Activated CD4-positive, alpha-beta T cell treated with anti-CD3 and anti-CD28 coated beads for 36 hours (primary cell): ENCODE measurements at regions of chr14 and their contacts with region 1.

Region 1: DNA sequence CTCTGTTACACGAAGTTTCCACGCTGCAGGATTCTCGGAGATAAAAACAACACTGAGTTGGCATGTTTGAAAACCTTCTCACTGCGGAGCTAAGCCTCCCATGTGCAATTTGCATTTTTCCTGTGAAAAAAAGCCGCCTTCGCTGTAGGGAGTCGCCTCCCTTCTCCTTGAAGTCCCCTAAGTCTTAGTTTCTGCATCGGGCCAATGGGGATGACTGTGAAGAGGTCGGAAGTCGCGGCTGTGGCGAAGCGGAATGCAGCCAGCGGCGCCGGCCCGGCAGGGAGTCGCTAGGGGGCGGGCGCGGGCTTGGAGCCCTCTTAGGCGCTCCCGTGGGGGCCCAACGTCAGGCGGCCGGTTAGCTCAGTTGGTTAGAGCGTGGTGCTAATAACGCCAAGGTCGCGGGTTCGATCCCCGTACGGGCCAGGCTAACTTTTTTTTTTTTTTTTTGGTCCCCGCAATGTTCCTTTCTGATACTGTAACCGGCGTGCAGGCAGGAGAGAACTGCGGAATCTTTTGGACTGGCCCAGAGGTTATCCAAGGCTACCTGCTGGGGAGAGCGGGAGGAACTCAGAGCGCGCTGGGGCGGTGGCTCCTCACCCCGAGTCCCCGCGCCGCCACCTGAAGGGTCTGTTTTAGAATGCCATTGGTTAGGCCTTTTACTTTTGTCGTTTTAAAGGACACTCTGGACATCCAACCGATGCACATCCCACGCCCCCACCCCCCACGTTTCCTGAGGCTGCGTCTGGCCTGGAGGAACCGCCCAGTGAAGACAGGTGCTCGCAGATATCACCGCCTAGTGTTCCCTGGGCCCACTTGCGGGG is 2.6 kb upstream of the ZNF839 start:
- DNase-seq: peak; percentile 97
- ATAC-seq: peak; percentile 69
- H3K4me3 Mint-ChIP-seq: peak overlapping the region; percentile 92
- H3K27ac Mint-ChIP-seq: peak overlapping the region; percentile 98
- H3K4me1 Mint-ChIP-seq: peaks cover 61% of the 10 kb centered on the region
- H3K27me3 Mint-ChIP-seq: no peaks in the 10 kb centered on the region

Region 2: DNA sequence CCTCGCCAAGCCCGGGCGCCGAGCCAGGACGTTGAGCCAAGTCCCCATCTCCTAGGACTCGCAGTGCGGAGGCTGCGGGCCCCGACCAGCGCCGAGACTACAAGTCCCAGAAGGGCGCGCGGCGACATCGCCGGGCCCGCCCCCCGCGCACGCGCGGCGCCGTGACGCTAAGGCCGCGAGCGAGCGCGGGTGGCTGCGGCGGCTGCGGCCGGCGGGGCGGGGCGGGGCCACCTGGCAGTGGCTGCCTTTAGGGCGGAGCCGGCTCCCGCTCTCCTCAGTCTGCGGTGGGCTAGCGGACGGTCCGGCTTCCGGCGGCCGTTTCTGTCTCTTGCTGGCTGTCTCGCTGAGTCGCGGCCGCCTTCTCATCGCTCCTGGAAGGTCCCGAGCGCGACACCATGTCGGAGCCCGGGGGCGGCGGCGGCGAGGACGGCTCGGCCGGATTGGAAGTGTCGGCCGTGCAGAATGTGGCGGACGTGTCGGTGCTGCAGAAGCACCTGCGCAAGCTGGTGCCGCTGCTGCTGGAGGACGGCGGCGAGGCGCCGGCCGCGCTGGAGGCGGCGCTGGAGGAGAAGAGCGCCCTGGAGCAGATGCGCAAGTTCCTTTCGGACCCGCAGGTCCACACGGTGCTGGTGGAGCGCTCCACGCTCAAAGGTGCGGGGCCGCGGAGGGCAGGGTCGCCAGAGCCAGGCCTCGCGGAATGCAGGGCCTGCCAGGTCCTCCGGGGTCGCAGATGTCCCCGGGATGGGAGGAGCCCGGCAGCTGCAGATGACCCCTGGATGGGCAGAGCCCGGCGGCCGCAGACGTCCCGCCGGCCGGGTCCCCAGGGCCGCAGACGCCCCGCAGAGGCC is 352.4 kb before region 1 on chr14 and contains the start of gene DYNC1H1:
- CTCF ChIA-PET with region 1: interaction called, 4 read pairs
- POLR2A ChIA-PET with region 1: no interaction called
- intact Hi-C with region 1: loop called (anchors 1 to 2 kb)
- DNase-seq: peak; percentile 93
- ATAC-seq: peak; percentile 82
- H3K4me3 Mint-ChIP-seq: peak within 1 kb of the TSS; percentile 89
- H3K27ac Mint-ChIP-seq: peak within 1 kb of the TSS; percentile 91
- H3K4me1 Mint-ChIP-seq: peaks cover 39% of the 10 kb centered on the region
- H3K27me3 Mint-ChIP-seq: no peaks in the 10 kb centered on the region
- total RNA-seq, gene DYNC1H1: 283 to 293 TPM

Region 3: GRCh38 chr14:102139248-102140026 is 177.5 kb before region 1 on chr14 and contains the start of gene WDR20:
- CTCF ChIA-PET with region 1: interaction called, 3 read pairs
- POLR2A ChIA-PET with region 1: no interaction called
- intact Hi-C with region 1: loop called (anchors 1 kb)
- DNase-seq: peak; percentile 100
- ATAC-seq: peak; percentile 94
- H3K4me3 Mint-ChIP-seq: peak within 1 kb of the TSS; percentile 96
- H3K27ac Mint-ChIP-seq: peak within 1 kb of the TSS; percentile 94
- H3K4me1 Mint-ChIP-seq: peaks cover 21% of the 10 kb centered on the region
- H3K27me3 Mint-ChIP-seq: no peaks in the 10 kb centered on the region
- total RNA-seq, gene WDR20: 18.2 to 24.8 TPM

Region 4: DNA sequence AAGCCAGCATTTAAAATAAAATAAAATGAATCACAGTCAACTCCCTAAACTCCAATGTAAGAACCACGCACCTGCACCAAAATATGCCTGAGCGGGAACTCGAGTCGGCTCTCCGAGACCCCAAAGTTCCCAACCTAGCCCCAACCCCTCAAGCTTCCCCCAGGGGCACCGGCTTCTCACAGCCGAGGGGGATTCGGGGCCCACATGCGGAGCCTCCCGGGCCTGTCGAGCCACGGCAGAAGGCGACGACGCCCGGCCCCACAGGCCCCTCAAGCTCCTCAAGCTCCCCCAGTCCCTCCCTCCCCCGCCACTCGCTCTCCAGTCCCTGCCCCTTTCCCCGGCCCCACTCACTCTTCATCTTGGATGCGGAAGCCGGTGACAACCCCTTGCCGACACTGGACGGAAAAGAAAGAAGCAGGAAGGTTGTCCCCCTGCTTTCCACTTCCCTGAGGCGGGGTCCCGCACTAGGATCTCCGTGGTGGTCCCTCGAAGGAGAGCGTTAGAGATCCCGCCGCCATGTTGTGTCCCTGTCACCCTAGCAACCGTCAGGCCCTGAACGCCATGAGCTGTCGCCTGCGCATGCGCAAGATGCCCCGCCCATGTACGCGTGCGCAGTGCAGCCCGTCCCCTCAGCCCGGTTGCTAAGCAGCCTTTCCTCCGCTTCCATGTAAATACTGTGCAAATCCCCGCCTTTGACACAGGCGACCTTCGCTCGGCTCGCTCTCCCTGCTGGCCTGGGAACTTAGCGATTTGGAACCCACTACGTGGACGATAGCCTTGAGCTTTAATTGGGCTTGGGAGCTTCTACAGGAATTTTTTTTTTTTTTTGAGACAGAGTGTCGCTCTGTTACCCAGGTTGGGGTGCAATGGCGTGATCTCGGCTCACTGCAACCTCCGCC is 12.1 kb before region 1 on chr14 and contains the start of gene MOK:
- CTCF ChIA-PET with region 1: interaction called, 20 read pairs
- POLR2A ChIA-PET with region 1: interaction called, 6 read pairs
- intact Hi-C with region 1: loop called in 1 of 2 experiments (anchors 1 kb)
- DNase-seq: peak; percentile 97
- ATAC-seq: peak; percentile 98
- H3K4me3 Mint-ChIP-seq: peak within 1 kb of the TSS; percentile 93
- H3K27ac Mint-ChIP-seq: peak within 1 kb of the TSS; percentile 60
- H3K4me1 Mint-ChIP-seq: peaks cover 5% of the 10 kb centered on the region
- H3K27me3 Mint-ChIP-seq: no peaks in the 10 kb centered on the region
- total RNA-seq, gene MOK: 6.5 to 6.6 TPM

Region 5: DNA sequence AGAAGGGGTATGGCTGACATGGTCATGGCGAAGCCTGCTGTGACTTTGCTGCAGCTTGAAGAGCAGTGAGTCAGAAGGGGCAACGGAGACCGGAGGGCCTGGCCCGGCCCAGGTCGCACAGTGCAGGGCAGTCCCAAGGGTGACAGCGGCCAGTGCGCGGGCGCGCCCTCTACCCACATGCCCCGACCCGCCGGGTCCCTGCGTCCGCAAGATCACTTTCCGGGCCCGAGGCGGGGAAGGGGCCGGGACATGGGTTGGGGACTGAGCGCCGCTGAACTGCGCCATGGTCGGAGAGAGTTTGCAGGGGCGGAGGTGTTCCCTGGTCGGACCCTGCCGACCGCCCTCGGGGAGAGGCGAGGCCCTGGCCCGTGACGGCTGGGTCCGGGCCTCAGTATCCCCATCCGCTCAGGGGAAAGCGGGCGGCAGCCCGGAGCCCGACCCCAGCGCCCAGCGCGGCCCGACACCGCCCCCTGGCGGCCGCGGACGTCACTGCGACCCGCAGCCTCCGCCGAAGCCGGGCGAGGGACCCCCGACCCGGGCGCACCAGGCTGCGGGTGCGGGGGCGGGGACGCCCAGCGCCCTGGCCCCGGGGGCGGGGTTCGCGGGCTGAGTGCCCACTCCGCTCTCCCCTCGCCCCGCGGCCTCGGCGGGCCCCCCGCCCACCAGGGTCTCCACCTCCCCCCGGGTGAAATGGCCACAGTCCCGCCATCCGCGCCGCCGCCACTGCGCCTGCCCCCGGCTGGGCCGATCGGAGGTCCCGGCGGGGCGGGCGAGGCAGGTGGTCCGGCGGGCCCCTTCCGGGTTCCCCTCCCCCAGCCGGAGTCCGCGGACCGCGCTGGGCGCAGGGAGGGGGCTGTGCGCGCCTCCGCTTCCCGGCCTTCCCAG is 199.8 kb after region 1 on chr14:
- CTCF ChIA-PET with region 1: interaction called, 4 read pairs
- POLR2A ChIA-PET with region 1: no interaction called
- intact Hi-C with region 1: loop called (anchors 1 to 2 kb)
- DNase-seq: peak; percentile 76
- ATAC-seq: peak; percentile 85
- H3K4me3 Mint-ChIP-seq: peak overlapping the region; percentile 68
- H3K27ac Mint-ChIP-seq: no peak overlapping the region
- H3K4me1 Mint-ChIP-seq: peaks cover 3% of the 10 kb centered on the region
- H3K27me3 Mint-ChIP-seq: peaks cover 8% of the 10 kb centered on the region